T-cell (primary cell): ENCODE measurements at regions of chr6 and their contacts with region 1.

Region 1: GRCh38 chr6:35259194-35259947 is at the start of gene ZNF76:
- DNase-seq: peak; percentile 77 to 97 (median 89)
- ATAC-seq: peak; percentile 85 to 90 (median 88)
- H3K4me3 ChIP-seq: peak within 1 kb of the TSS; percentile 90 to 99
- H3K4me3 Mint-ChIP-seq: peak within 1 kb of the TSS; percentile 94 to 95 (median 94)
- H3K27ac ChIP-seq: peak within 1 kb of the TSS; percentile 97
- H3K27ac Mint-ChIP-seq: peak within 1 kb of the TSS; percentile 94 to 96
- H3K4me1 ChIP-seq: peaks cover 7 to 35% of the 10 kb centered on the region in 2 experiments
- H3K4me1 Mint-ChIP-seq: peaks cover 49 to 56% (median 54%) of the 10 kb centered on the region in 3 donors
- H3K27me3 ChIP-seq: no peaks in the 10 kb centered on the region
- H3K27me3 Mint-ChIP-seq: no peaks in the 10 kb centered on the region
- total RNA-seq, gene ZNF76: 72.7 to 91.3 (median 84.8) TPM

Region 2: GRCh38 chr6:35283361-35283760 is 24.0 kb after region 1 on chr6:
- CTCF ChIA-PET with region 1: no interaction called
- POLR2A ChIA-PET with region 1: interaction called in 1 of 2 experiments, 10 read pairs
- DNase-seq: no peak
- ATAC-seq: no peak
- H3K4me3 ChIP-seq: no peak overlapping the region
- H3K4me3 Mint-ChIP-seq: no peak overlapping the region
- H3K27ac ChIP-seq: no peak overlapping the region
- H3K27ac Mint-ChIP-seq: peak overlapping the region in 1 of 2 donors; percentile 36
- H3K4me1 ChIP-seq: no peaks in the 10 kb centered on the region
- H3K4me1 Mint-ChIP-seq: peaks cover 0 to 5% (median 3%) of the 10 kb centered on the region in 3 donors
- H3K27me3 ChIP-seq: no peaks in the 10 kb centered on the region
- H3K27me3 Mint-ChIP-seq: no peaks in the 10 kb centered on the region

Region 3: GRCh38 chr6:36241728-36242127 is 982.4 kb after region 1 on chr6:
- CTCF ChIA-PET with region 1: no interaction called
- POLR2A ChIA-PET with region 1: no interaction called
- DNase-seq: no peak
- ATAC-seq: peak in 1 of 4 experiments; percentile 28
- H3K4me3 ChIP-seq: no peak overlapping the region
- H3K4me3 Mint-ChIP-seq: no peak overlapping the region
- H3K27ac ChIP-seq: no peak overlapping the region
- H3K27ac Mint-ChIP-seq: no peak overlapping the region
- H3K4me1 ChIP-seq: peaks cover 3 to 4% of the 10 kb centered on the region in 2 experiments
- H3K4me1 Mint-ChIP-seq: peaks cover 11 to 16% (median 13%) of the 10 kb centered on the region in 3 donors
- H3K27me3 ChIP-seq: no peaks in the 10 kb centered on the region
- H3K27me3 Mint-ChIP-seq: peaks cover 4 to 5% of the 10 kb centered on the region in 2 donors